ENCODE measurements at regions of chr17 and their contacts with region 1.

Region 1: GRCh38 chr17:11651089-11651488 is 52.8 kb downstream of the DNAH9 start:
- DNase-seq: no peak
- ATAC-seq: no peak
- H3K4me3 ChIP-seq: no peak overlapping the region
- H3K27ac ChIP-seq: no peak overlapping the region
- H3K4me1 ChIP-seq: no peaks in the 10 kb centered on the region
- H3K27me3 ChIP-seq: no peaks in the 10 kb centered on the region

Region 2: DNA sequence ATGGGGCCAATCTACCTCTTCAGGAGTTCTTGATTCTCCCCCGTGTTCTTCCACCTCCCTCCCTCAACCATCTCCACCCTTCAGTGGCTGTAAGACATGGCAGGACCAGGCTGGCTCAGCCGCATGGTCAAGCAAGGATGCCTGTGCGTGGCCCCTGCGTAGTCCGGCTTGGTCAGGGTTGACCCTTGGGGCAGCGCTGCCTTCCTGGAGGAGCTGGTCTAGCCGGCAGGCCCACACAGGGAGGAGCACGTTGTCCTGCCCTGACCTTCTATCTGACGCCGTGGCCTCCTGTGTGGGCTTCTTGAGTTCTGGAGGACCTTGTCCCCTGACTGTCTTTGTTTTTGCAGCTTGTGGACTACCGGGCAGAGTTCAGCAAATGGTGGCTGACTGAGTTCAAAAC is 117.0 kb after region 1 on chr17:
- intact Hi-C with region 1: no loop called
- DNase-seq: no peak
- ATAC-seq: no peak
- H3K4me3 ChIP-seq: no peak overlapping the region
- H3K27ac ChIP-seq: no peak overlapping the region
- H3K4me1 ChIP-seq: no peaks in the 10 kb centered on the region
- H3K27me3 ChIP-seq: no peaks in the 10 kb centered on the region

Region 3: GRCh38 chr17:11969565-11969964 is 318.5 kb after region 1 on chr17:
- intact Hi-C with region 1: loop called in 1 of 2 experiments (anchors 5 kb)
- DNase-seq: no peak
- ATAC-seq: no peak
- H3K4me3 ChIP-seq: no peak overlapping the region
- H3K27ac ChIP-seq: no peak overlapping the region
- H3K4me1 ChIP-seq: no peaks in the 10 kb centered on the region
- H3K27me3 ChIP-seq: no peaks in the 10 kb centered on the region